Naive thymus-derived CD4-positive, alpha-beta T cell (primary cell): ENCODE measurements at regions of chr17 and their contacts with region 1.

Region 1: DNA sequence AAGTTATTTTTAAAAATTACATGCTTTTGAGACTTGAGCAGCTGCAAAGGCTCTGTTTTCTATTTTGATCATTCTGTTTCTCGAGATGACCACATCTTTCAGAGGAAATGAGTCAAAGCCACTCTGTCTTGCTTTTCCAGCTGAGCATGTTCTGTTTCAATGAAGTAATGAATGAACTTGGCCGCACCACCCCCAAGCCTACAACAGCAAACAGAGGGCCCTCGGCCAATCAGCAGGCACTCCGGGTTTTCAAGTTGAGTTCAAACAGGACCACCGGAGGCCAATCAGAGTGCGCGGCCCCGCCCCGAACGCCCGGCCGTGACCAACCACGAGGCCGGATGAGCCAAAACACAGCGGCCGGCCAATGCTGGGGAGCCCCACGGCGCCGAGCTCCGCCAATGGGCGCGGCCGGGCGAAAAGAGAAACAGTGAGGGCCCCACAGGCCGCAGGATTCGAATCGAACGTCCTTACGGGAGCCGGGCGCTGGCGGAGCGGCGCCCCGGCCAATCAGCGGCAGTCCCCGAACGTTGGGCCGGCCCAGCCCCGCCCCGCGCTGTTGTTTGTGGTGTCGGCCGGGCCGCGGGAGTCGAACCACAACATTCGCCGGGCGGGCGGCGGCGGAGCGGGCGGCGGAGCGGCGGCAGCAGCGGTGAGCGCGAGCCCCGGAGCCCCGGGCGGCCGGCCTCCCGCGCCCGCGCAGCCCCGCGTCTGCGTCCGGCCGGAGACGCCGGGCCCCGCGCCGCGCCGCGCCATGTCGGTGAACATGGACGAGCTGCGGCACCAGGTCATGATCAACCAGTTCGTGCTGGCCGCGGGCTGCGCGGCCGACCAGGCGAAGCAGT is at the start of gene UBALD2:
- DNase-seq: peak; percentile 95 to 99 (median 98)
- ATAC-seq: peak; percentile 90
- H3K4me3 ChIP-seq: peak within 1 kb of the TSS; percentile 71
- H3K4me3 Mint-ChIP-seq: peak within 1 kb of the TSS; percentile 87 to 95 (median 92)
- H3K27ac ChIP-seq: peak within 1 kb of the TSS; percentile 92
- H3K27ac Mint-ChIP-seq: peak within 1 kb of the TSS; percentile 81 to 98 (median 94)
- H3K4me1 ChIP-seq: peaks cover 46 to 58% of the 10 kb centered on the region in 2 donors
- H3K4me1 Mint-ChIP-seq: peaks cover 47 to 70% (median 61%) of the 10 kb centered on the region in 7 donors
- H3K27me3 ChIP-seq: no peaks in the 10 kb centered on the region
- H3K27me3 Mint-ChIP-seq: peaks cover 0 to 3% (median 0%) of the 10 kb centered on the region in 5 donors
- total RNA-seq, gene UBALD2: 103 to 263 (median 241) TPM

Region 2: GRCh38 chr17:76072148-76072858 is 192.7 kb before region 1 on chr17 and contains the start of gene SRP68:
- CTCF ChIA-PET with region 1: no interaction called
- POLR2A ChIA-PET with region 1: no interaction called
- intact Hi-C with region 1: no loop called
- DNase-seq: peak; percentile 63 to 86 (median 74)
- ATAC-seq: peak; percentile 92
- H3K4me3 ChIP-seq: peak within 1 kb of the TSS; percentile 89
- H3K4me3 Mint-ChIP-seq: peak within 1 kb of the TSS; percentile 85 to 98 (median 97)
- H3K27ac ChIP-seq: peak within 1 kb of the TSS; percentile 93
- H3K27ac Mint-ChIP-seq: peak within 1 kb of the TSS; percentile 90 to 98 (median 95)
- H3K4me1 ChIP-seq: peaks cover 10 to 37% of the 10 kb centered on the region in 2 donors
- H3K4me1 Mint-ChIP-seq: peaks cover 21 to 62% (median 52%) of the 10 kb centered on the region in 7 donors
- H3K27me3 ChIP-seq: peaks cover 13 to 14% of the 10 kb centered on the region in 2 donors
- H3K27me3 Mint-ChIP-seq: peaks cover 17 to 37% (median 24%) of the 10 kb centered on the region in 5 donors
- total RNA-seq, gene SRP68: 70.8 to 105 (median 91.9) TPM

Region 3: DNA sequence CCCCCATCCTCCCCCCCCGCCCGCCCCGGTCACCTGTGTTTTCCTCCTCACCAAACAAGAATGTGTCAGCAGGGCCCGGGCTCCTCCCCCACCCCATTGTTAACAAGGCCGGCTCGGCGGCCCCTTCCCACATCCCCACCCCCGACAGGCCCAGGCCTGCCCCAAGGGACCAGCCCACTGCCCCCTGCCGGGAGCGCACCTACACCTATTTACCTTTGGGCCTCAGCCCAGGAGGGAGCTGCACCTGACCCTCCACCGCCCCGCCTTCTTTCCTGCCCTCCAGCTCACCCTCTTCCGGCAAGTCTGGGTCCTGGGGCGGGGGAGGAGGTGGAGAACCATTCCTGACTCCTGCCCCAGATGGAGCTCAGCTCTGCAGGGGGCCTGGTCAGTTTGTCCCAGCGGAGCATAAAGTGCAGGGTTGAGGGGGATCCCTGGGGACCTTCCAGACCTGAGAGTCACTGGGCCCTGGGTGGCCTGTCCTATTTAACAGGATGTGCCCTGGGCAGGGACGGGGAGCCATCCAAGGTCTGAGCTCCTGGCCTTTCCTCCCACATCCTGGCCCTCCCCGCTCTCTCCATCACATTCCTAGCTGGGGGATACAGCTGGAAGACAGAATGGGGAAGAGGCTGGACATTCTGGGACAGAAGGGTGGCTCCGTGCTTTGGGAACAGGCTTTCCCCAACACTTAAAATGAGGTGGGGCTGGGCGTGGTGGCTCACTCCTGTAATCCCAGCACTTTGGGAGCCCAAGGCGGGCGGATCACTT is 132.2 kb before region 1 on chr17:
- CTCF ChIA-PET with region 1: interaction called, 3 read pairs
- POLR2A ChIA-PET with region 1: interaction called, 12 read pairs
- intact Hi-C with region 1: no loop called
- DNase-seq: no peak
- ATAC-seq: no peak
- H3K4me3 ChIP-seq: no peak overlapping the region
- H3K4me3 Mint-ChIP-seq: no peak overlapping the region
- H3K27ac ChIP-seq: no peak overlapping the region
- H3K27ac Mint-ChIP-seq: no peak overlapping the region
- H3K4me1 ChIP-seq: peaks cover 0 to 13% of the 10 kb centered on the region in 2 donors
- H3K4me1 Mint-ChIP-seq: peaks cover 14 to 24% (median 16%) of the 10 kb centered on the region in 7 donors
- H3K27me3 ChIP-seq: no peaks in the 10 kb centered on the region
- H3K27me3 Mint-ChIP-seq: peaks cover 0 to 2% (median 0%) of the 10 kb centered on the region in 5 donors

Region 4: GRCh38 chr17:76153640-76154039 is 111.3 kb before region 1 on chr17:
- CTCF ChIA-PET with region 1: interaction called, 3 read pairs
- POLR2A ChIA-PET with region 1: interaction called, 15 read pairs
- intact Hi-C with region 1: no loop called
- DNase-seq: no peak
- ATAC-seq: no peak
- H3K4me3 ChIP-seq: no peak overlapping the region
- H3K4me3 Mint-ChIP-seq: peak overlapping the region in 7 of 10 donors; percentile 11 to 81 (median 30)
- H3K27ac ChIP-seq: peak overlapping the region; percentile 52
- H3K27ac Mint-ChIP-seq: peak overlapping the region in 8 of 9 donors; percentile 93 to 99 (median 98)
- H3K4me1 ChIP-seq: peaks cover 13 to 48% of the 10 kb centered on the region in 2 donors
- H3K4me1 Mint-ChIP-seq: peaks cover 24 to 73% (median 64%) of the 10 kb centered on the region in 7 donors
- H3K27me3 ChIP-seq: no peaks in the 10 kb centered on the region
- H3K27me3 Mint-ChIP-seq: no peaks in the 10 kb centered on the region

Region 5: DNA sequence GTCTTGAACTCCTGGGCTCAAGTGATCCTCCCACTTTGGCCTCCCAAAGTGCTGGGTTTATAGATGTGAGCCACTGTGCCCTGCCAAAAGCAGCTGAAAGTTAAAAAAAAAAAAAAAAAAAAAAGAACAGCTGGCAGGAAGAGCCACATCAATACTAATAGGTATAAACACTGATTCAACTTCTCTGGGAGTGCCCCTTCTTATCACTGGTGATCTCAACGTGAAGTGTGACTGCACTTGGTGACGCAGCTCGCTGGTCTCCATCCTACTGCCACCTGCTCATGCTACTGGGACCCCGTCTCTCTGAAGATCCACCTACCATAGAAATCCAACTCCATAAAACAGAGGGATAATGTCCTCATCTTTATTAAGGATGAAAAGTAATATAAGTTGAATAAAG is 65.5 kb before region 1 on chr17:
- CTCF ChIA-PET with region 1: no interaction called
- POLR2A ChIA-PET with region 1: interaction called, 16 read pairs
- intact Hi-C with region 1: loop called in 1 of 2 experiments (anchors 1 kb)
- DNase-seq: peak in 7 of 9 donors; percentile 66 to 88 (median 84)
- ATAC-seq: peak; percentile 99
- H3K4me3 ChIP-seq: no peak overlapping the region
- H3K4me3 Mint-ChIP-seq: peak overlapping the region; percentile 48 to 76 (median 64)
- H3K27ac ChIP-seq: peak overlapping the region; percentile 79
- H3K27ac Mint-ChIP-seq: peak overlapping the region; percentile 88 to 98 (median 95)
- H3K4me1 ChIP-seq: peaks cover 23 to 66% of the 10 kb centered on the region in 2 donors
- H3K4me1 Mint-ChIP-seq: peaks cover 42 to 90% (median 86%) of the 10 kb centered on the region in 7 donors
- H3K27me3 ChIP-seq: no peaks in the 10 kb centered on the region
- H3K27me3 Mint-ChIP-seq: no peaks in the 10 kb centered on the region

Region 6: DNA sequence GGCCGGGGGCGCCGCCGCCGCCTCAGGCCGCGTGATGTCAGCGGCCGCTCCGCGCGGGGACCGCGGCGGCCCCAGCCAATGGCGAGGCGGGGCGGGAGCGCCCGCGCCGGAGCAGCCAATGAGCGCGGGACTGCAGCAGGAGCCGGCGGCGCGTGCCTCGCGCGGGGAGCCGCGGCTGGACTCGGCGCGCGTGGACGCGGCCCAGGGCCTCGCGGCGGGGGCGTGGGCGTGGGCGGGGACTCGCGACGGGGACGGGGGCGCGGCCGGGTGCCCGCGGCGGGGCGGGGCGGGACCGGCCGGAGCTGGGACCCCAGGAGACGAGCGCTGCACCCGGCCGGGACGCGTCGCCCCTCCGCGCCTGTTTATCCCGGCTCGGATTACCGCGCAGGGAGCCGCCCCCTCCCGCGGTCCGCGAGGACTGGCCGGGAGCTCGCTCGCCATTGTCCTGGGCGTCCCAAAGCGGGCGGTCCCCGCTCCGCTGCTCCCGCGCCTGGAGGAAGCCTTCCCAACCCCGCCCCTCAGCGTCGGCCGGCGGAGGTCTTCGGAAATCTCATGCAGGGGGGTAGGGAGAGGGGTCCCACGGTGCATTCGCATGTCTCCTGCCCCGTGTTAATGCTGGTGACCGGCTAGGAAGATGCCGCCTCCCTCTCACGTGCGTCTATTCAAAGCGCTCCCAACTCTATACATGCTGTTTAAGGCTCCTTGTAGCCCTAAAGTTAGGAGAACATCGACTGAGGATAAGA is 24.3 kb before region 1 on chr17 and contains the start of gene RNF157:
- CTCF ChIA-PET with region 1: interaction called, 14 read pairs
- POLR2A ChIA-PET with region 1: interaction called, 375 read pairs
- intact Hi-C with region 1: loop called (anchors 1 to 5 kb)
- DNase-seq: peak; percentile 57 to 78 (median 69)
- ATAC-seq: peak; percentile 97
- H3K4me3 ChIP-seq: peak within 1 kb of the TSS; percentile 70
- H3K4me3 Mint-ChIP-seq: peak within 1 kb of the TSS; percentile 87 to 97 (median 94)
- H3K27ac ChIP-seq: peak within 1 kb of the TSS; percentile 78
- H3K27ac Mint-ChIP-seq: peak within 1 kb of the TSS; percentile 89 to 96 (median 92)
- H3K4me1 ChIP-seq: peaks cover 10 to 49% of the 10 kb centered on the region in 2 donors
- H3K4me1 Mint-ChIP-seq: peaks cover 27 to 80% (median 73%) of the 10 kb centered on the region in 7 donors
- H3K27me3 ChIP-seq: no peaks in the 10 kb centered on the region
- H3K27me3 Mint-ChIP-seq: peaks cover 0 to 4% (median 0%) of the 10 kb centered on the region in 5 donors
- total RNA-seq, gene RNF157: 49.2 to 96.3 (median 50.8) TPM

Region 7: DNA sequence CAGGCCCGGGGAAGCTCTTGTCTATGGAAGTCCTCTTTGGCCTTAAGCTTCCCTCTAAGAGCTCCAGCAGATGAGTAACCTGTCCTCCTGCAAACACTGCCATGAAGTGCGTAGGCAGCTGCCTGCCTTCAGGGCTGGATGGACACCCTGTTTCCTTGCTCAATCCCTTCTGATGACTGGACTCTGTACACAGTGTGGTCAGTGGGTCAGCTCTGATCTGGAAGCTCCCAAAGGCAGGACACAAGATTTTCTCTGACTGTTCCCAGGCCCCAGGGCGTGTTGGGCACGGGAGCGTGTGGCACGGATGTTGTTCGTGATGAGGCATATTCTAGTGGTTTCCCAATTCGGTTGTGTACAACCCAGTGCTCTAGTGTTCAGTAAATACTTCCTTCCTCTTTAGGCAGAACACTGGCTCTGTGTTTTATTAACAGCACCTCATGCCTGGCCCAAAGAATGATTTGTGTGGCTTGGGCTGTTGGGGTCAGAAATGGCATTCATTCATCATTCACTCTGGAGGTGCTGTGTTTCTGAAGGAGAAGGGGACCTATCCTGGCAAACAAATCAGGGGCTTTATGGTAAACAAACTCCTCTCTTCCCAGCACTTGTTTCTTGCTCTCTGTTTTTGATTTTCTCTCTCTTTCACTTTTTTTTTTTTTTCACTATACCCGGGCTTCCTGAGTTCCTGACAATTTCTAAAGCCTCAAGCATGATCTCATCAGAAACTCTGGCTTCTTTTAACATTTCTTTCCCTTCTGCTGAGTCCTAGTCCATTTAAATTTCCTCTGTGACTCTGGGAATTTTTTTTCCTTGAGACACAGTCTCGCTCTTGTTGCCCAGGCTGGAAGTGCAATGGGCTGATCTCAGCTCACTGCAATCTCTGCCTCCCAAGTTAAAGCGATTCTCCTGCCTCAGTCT is 12.7 kb before region 1 on chr17:
- CTCF ChIA-PET with region 1: interaction called, 3 read pairs
- POLR2A ChIA-PET with region 1: interaction called, 375 read pairs
- intact Hi-C with region 1: loop called (anchors 1 kb)
- DNase-seq: peak in 6 of 9 donors; percentile 37 to 63 (median 56)
- ATAC-seq: peak; percentile 86
- H3K4me3 ChIP-seq: peak overlapping the region; percentile 27
- H3K4me3 Mint-ChIP-seq: peak overlapping the region; percentile 69 to 86 (median 82)
- H3K27ac ChIP-seq: peak overlapping the region; percentile 68
- H3K27ac Mint-ChIP-seq: peak overlapping the region; percentile 88 to 99 (median 95)
- H3K4me1 ChIP-seq: peaks cover 33 to 47% of the 10 kb centered on the region in 2 donors
- H3K4me1 Mint-ChIP-seq: peaks cover 39 to 82% (median 65%) of the 10 kb centered on the region in 7 donors
- H3K27me3 ChIP-seq: no peaks in the 10 kb centered on the region
- H3K27me3 Mint-ChIP-seq: no peaks in the 10 kb centered on the region